PC-3 (cell line): ENCODE measurements at regions of chr14 and their contacts with region 1.

Region 1: DNA sequence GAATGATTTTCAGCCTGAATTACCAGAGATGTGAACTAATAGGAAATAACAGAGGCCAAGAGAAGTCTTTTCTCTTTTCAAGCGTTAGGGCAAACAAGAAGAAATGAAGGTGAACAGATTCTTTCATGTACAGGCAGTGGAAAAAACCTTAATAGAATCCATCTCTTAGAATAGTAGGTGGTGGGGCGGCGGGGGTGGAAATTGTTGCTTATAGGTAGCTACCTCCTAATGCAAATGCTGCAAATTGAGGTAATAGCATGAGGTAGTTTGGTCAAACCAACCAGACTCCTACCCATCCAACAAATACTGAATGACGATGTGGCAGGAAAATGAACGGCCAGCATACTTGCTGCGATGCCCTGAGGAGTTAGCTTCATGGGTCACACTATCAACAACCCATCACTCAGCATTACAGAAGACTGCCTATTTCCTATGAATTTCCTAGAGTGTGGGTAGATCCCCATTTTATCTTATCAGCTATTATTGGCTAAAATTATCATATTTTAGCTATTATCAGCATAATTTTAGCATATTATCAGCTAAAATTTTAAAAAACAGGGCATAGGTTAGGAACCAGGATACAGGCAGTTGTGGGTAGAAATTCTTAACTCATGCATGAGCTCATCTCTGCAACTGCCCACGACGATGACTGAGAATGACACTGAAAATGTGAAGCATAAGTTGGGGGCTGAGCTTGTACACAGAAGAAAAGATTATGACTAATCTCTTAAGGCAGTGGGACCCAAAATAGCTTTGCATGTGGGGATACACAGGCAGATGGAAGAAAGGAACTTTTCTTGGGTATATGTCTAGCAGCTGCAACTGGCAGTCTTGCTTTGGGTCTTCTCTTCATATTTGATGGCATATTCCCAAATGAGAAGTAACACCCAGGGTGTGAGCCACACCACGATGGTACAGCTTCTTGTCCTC is 68.7 kb downstream of the NIN start:
- DNase-seq: peak; percentile 86
- ATAC-seq: peak; percentile 36
- H3K4me3 ChIP-seq: peak overlapping the region; percentile 25; the same call in 1 of the 2 replicates
- H3K27ac ChIP-seq: peak overlapping the region; percentile 94
- H3K4me1 ChIP-seq: peaks cover 29% of the 10 kb centered on the region
- H3K27me3 ChIP-seq: no peaks in the 10 kb centered on the region
- CTCF ChIP-seq: no peak

Region 2: GRCh38 chr14:50677527-50678063 is 84.7 kb before region 1 on chr14:
- CTCF ChIA-PET with region 1: interaction called, 5 read pairs
- POLR2A ChIA-PET with region 1: no interaction called
- intact Hi-C with region 1: loop called (anchors 1 kb)
- DNase-seq: peak; percentile 88
- ATAC-seq: peak; percentile 91
- H3K4me3 ChIP-seq: peak overlapping the region; percentile 54
- H3K27ac ChIP-seq: peak overlapping the region; percentile 80
- H3K4me1 ChIP-seq: peaks cover 44% of the 10 kb centered on the region
- H3K27me3 ChIP-seq: no peaks in the 10 kb centered on the region
- CTCF ChIP-seq: no peak

Region 3: GRCh38 chr14:50726372-50727107 is 35.7 kb before region 1 on chr14:
- CTCF ChIA-PET with region 1: no interaction called
- POLR2A ChIA-PET with region 1: interaction called, 21 read pairs
- intact Hi-C with region 1: no loop called
- DNase-seq: peak; percentile 77
- ATAC-seq: peak; percentile 91
- H3K4me3 ChIP-seq: no peak overlapping the region
- H3K27ac ChIP-seq: peak overlapping the region; percentile 48
- H3K4me1 ChIP-seq: peaks cover 21% of the 10 kb centered on the region
- H3K27me3 ChIP-seq: no peaks in the 10 kb centered on the region
- CTCF ChIP-seq: no peak

Region 4: DNA sequence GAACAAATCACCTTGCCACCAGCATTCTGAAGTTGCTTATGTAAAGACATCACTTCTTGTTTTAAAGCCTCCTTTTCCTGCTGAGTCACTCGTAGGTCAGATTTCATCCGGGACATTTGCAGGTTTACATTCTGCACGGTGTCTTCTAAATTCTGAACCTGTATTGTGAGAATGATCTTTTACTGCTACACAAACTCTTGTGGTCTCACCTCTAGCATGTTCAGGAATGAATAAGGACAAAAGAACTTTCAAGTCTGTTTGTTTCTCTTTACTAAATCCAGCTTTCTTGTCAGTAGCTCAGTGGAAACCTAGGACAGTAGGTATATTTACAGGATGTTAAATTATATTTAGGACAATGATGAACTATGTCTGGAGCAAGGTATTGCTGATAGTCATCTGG is 20.7 kb before region 1 on chr14:
- CTCF ChIA-PET with region 1: no interaction called
- POLR2A ChIA-PET with region 1: interaction called, 8 read pairs
- intact Hi-C with region 1: loop called (anchors 1 kb)
- DNase-seq: peak; percentile 95
- ATAC-seq: peak; percentile 93
- H3K4me3 ChIP-seq: peak overlapping the region; percentile 6; the same call in 1 of the 2 replicates
- H3K27ac ChIP-seq: peak overlapping the region; percentile 83
- H3K4me1 ChIP-seq: peaks cover 18% of the 10 kb centered on the region
- H3K27me3 ChIP-seq: no peaks in the 10 kb centered on the region
- CTCF ChIP-seq: no peak

Region 5: DNA sequence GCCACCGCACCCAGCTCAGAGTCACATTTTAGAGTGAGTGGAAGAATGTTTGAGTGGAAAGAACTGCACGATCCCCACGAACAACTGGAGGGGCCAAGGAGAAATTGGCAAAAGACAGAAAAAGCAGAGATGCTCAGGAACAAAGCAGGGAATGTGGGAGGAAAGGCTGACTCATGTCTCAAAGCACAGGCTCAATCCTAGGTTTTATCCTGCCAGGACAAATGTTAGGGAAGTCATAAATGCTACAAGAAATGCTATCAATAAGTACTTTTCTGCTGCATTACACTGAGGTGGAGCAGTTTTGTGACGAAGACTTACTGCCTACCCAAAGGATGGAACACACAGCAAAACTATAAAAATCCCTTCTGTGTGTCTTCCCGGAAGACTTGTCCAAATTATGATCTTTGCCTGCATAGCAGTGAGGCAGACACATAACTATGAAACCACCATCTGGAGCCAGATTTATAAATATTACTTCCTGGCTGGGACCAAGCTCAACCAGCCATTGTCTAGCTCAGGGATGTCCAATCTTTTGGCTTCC is 42.0 kb after region 1 on chr14:
- CTCF ChIA-PET with region 1: no interaction called
- POLR2A ChIA-PET with region 1: interaction called, 10 read pairs
- intact Hi-C with region 1: no loop called
- DNase-seq: no peak
- ATAC-seq: no peak; the same call in 1 of the 2 replicates
- H3K4me3 ChIP-seq: no peak overlapping the region
- H3K27ac ChIP-seq: no peak overlapping the region
- H3K4me1 ChIP-seq: peaks cover 31% of the 10 kb centered on the region
- H3K27me3 ChIP-seq: no peaks in the 10 kb centered on the region
- CTCF ChIP-seq: no peak

Region 6: GRCh38 chr14:50954811-50955372 is 192.6 kb after region 1 on chr14:
- CTCF ChIA-PET with region 1: no interaction called
- POLR2A ChIA-PET with region 1: no interaction called
- intact Hi-C with region 1: no loop called
- DNase-seq: peak; percentile 82
- ATAC-seq: peak; percentile 69
- H3K4me3 ChIP-seq: peak overlapping the region; percentile 20; the same call in 1 of the 2 replicates
- H3K27ac ChIP-seq: peak overlapping the region; percentile 89
- H3K4me1 ChIP-seq: peaks cover 19% of the 10 kb centered on the region
- H3K27me3 ChIP-seq: no peaks in the 10 kb centered on the region
- CTCF ChIP-seq: peak; percentile 91